Heart right ventricle (tissue), 16 donors: ENCODE measurements at regions of chr6 and their contacts with region 1.

Region 1: DNA sequence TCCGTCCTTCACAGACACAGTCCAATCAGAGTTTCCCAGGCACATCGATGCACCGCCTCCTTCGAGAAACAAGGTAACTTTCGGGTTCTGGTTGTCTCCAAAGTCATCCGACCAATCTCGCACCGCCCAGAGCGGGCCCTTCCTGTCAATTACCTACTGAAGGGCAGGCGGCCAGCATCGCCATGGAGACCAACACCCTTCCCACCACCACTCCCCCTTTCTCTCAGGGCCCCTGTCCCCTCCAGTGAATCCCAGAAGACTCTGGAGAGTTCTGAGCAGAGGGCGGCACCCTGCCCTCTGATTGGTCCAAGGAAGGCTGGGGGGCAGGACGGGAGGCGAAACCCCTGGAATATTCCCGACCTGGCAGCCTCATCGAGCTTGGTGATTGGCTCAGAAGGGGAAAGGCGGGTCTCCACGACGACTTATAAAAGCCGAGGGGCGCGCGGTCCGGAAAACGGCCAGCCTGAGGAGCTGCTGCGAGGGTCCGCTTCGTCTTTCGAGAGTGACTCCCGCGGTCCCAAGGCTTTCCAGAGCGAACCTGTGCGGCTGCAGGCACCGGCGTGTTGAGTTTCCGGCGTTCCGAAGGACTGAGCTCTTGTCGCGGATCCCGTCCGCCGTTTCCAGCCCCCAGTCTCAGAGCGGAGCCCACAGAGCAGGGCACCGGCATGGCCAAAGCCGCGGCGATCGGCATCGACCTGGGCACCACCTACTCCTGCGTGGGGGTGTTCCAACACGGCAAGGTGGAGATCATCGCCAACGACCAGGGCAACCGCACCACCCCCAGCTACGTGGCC is at the start of gene HSPA1B:
- DNase-seq: peak; percentile 98 to 99
- ATAC-seq: peak; percentile 92 to 97 (median 94)
- H3K4me3 ChIP-seq: peak within 1 kb of the TSS; percentile 42 to 78 (median 66)
- H3K27ac ChIP-seq: peak within 1 kb of the TSS; percentile 85 to 99 (median 96)
- H3K4me1 ChIP-seq: peaks cover 9 to 54% (median 46%) of the 10 kb centered on the region in 9 donors
- H3K27me3 ChIP-seq: no peaks in the 10 kb centered on the region
- CTCF ChIP-seq: no peak
- total RNA-seq, gene HSPA1B: 126 to 258 (median 169) TPM

Region 2: DNA sequence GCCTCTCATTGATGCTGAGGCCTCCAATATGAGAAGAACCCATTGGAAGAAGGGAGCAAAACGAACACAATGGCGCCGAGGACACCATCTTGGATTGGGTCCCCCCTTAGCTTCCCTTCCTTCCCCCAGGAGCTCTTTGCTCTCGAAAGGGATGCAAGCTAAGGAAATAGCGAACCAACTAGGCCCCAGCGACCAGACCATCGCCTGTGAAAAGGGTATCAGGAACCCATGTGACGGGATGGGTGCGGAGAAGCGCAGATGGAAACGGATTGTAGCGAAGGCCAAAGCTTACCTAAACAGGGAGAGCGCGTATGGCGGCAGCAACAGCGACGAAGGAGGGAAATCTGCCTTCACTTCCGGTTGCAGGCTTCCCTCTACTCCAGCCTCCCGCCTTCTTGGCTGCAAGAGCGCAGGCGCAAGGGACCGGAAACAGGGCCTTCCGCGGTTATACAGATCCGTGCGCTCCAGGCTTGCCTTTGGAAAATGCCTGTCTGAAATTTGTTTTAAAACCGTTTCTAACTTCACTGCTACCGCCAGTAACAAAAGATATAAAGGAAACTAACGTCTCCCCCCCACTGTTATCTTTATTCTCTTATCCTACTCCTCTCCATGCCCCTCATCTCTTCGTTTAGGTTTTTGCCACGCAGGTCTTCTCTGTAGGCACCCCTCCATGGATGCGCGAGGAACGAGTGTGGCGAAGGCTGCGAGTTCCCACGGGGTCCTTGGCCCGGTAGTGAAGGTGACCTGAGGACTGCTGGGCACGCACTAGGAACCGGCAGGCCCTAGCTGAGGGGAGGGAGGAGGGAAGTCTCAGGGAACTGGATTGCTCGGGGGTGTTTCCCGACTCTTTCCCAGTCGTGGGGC is 285.6 kb before region 1 on chr6 and contains the start of gene DDX39B:
- intact Hi-C with region 1: loop called in 3 of 10 experiments (anchors 10 kb)
- DNase-seq: peak; percentile 93 to 96
- ATAC-seq: peak; percentile 93 to 96 (median 94)
- H3K4me3 ChIP-seq: peak within 1 kb of the TSS; percentile 42 to 87 (median 73)
- H3K27ac ChIP-seq: peak within 1 kb of the TSS; percentile 81 to 100 (median 93)
- H3K4me1 ChIP-seq: peaks cover 22 to 55% (median 41%) of the 10 kb centered on the region in 9 donors
- H3K27me3 ChIP-seq: no peaks in the 10 kb centered on the region
- CTCF ChIP-seq: no peak
- total RNA-seq, gene DDX39B: 154 to 193 (median 172) TPM

Region 3: DNA sequence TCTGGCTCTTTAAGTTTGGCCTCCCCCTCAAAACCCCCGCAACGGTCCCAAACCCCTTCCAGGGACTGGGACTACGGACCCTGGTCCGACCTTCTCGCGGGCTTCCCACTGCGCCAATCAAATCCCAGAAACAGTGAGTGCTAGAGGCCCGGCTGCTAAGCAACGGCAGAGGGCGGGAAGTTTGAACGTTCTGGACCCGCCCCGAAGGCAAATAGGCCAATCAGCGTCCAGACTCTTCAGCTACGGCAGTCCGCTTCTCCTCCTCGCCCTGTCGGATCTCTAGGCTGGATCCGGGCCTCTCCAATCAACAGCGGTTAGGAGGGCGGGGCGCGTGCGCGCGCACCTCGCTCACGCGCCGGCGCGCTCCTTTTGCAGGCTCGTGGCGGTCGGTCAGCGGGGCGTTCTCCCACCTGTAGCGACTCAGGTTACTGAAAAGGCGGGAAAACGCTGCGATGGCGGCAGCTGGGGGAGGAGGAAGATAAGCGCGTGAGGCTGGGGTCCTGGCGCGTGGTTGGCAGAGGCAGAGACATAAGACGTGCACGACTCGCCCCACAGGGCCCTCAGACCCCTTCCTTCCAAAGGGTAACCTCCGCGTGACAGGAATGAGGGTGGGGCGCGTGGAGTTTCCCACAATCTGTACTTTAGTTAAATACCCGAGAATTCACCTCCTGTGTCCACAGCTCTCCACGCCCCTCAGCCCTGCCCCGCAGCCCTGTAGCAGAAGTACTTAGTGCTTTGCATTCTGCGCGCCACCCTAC is 87.7 kb before region 1 on chr6 and contains the start of gene MSH5:
- intact Hi-C with region 1: loop called in 4 of 10 experiments (anchors 5 to 10 kb)
- DNase-seq: peak; percentile 97 to 99
- ATAC-seq: peak; percentile 90 to 96 (median 94)
- H3K4me3 ChIP-seq: peak within 1 kb of the TSS; percentile 56 to 94 (median 76)
- H3K27ac ChIP-seq: peak within 1 kb of the TSS in 9 of 10 donors; percentile 20 to 98 (median 66)
- H3K4me1 ChIP-seq: peaks cover 4 to 42% (median 38%) of the 10 kb centered on the region in 9 donors
- H3K27me3 ChIP-seq: no peaks in the 10 kb centered on the region
- CTCF ChIP-seq: no peak
- total RNA-seq, gene MSH5: 0.89 to 4.3 (median 2.6) TPM

Region 4: DNA sequence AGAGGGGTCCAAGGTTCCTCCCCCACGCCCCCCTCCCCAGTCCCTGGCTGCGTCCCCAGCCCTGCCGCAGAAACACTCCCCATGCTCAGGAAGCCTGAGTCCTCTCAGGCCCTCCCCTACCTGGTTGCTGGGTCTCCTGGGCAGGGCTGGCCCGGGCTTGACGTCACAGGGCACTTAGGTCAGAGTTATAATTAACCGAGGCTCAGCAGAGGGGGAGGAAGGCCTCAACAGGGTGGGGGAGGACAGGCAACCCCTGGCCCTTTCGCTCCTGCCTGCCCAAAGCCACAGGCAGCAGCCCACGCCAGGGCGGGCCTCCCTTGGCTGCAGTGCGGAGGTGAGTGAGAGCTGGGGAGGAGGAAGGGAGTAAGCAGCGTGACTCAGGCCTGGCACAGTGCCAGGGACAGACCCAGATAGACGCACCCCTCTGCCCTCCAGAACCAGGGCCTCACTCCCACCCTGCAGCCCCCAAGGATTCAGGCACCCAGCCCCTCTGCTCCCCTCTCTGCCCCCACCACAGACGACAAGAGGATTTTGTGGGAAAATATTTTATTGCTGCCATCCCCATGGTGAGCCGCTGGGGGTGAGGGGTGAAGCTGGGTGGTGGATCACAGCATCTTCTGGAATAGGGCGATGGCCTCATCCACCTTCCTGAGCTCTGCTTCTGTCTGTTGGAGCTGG is 50.4 kb before region 1 on chr6 and contains the start of gene VWA7:
- intact Hi-C with region 1: loop called in 5 of 10 experiments (anchors 2 to 10 kb)
- DNase-seq: peak; percentile 64 to 77
- ATAC-seq: peak; percentile 78 to 93 (median 89)
- H3K4me3 ChIP-seq: peak within 1 kb of the TSS in 8 of 10 donors; percentile 13 to 47 (median 36)
- H3K27ac ChIP-seq: peak within 1 kb of the TSS; percentile 29 to 83 (median 74)
- H3K4me1 ChIP-seq: peaks cover 7 to 23% (median 13%) of the 10 kb centered on the region in 9 donors
- H3K27me3 ChIP-seq: no peaks in the 10 kb centered on the region
- CTCF ChIP-seq: no peak
- total RNA-seq, gene VWA7: 10.0 to 28.3 (median 20.8) TPM

Region 5: DNA sequence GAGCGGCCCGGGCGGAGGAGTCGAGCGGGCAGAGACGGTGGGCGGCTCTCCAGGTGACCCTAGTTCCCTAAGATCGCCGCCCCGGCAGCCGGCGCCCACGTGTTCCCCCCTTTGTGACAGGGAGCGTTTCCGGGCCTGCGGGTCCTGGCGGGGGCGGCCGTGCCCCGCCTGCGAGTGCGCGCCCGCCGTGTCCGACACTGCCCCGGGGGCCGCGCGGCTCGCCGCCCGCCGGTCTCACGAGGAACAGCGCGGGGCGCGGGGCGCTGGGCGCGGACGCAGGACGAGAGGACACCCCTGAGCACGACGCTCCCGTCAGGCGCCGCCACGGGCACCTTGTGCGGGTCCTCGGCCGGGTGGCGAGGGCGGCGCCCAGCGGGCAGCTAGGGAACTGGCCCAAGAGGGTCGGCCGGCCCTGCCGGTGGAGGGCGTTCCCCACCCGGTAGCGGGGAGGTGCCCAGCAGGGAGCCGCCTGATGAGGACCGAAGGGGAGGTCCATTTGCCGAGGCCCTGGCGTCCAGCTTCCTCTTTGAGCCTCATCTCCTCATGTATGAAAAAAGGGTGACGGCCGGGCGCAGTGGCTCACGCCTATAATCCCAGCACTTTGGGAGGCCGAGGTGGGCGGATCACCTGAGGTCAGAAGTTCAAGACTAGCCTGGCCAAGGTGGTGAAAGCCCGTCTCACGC is 31.7 kb before region 1 on chr6 and contains the start of gene VARS1:
- intact Hi-C with region 1: loop called in 3 of 10 experiments (anchors 2 to 5 kb)
- DNase-seq: peak; percentile 90 to 95
- ATAC-seq: peak; percentile 92 to 96 (median 94)
- H3K4me3 ChIP-seq: peak within 1 kb of the TSS; percentile 57 to 99 (median 86)
- H3K27ac ChIP-seq: peak within 1 kb of the TSS; percentile 84 to 99 (median 96)
- H3K4me1 ChIP-seq: peaks cover 5 to 39% (median 14%) of the 10 kb centered on the region in 9 donors
- H3K27me3 ChIP-seq: no peaks in the 10 kb centered on the region
- CTCF ChIP-seq: peak; percentile 65 to 94 (median 88)
- total RNA-seq, gene VARS1: 22.4 to 43.4 (median 29.5) TPM